Activated CD8-positive, alpha-beta memory T cell treated with anti-CD3 and anti-CD28 coated beads, Interleukin-2, amount 10 ng/mL, durations not matched to agents 7 days and 5 days (primary cell): ENCODE measurements at regions of chr14 and their contacts with region 1.

Region 1: DNA sequence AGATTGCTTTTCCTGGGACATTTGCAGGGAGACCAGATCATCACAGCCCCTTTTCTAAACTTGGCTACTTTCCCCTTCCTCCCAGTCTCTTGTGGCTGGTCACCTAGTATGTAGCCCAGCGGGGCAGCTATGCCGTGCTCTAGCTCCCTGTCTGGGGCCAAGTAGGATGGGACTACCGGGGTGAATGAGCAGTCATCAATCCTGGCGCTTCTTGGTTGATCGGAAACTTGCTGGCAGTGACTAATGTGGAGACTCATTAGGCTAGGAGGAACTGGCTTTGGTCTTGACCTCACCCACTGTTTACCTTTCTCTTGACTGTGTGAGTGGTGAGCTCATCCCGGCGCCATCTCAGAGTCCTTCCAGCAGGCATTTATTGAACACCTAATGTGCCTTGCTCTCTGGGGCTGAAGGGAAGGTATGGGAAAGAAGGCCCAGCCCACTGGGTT is 15.9 kb downstream of the PLEKHG3 start:
- DNase-seq: no peak
- ATAC-seq: no peak
- H3K4me3 Mint-ChIP-seq: no peak overlapping the region
- H3K27ac Mint-ChIP-seq: no peak overlapping the region
- H3K4me1 Mint-ChIP-seq: peaks cover 69% of the 10 kb centered on the region
- H3K27me3 Mint-ChIP-seq: no peaks in the 10 kb centered on the region

Region 2: GRCh38 chr14:64681796-64682710 is 38.1 kb before region 1 on chr14:
- CTCF ChIA-PET with region 1: no interaction called
- DNase-seq: no peak
- ATAC-seq: no peak
- H3K4me3 Mint-ChIP-seq: no peak overlapping the region
- H3K27ac Mint-ChIP-seq: peak overlapping the region; percentile 31
- H3K4me1 Mint-ChIP-seq: peaks cover 17% of the 10 kb centered on the region
- H3K27me3 Mint-ChIP-seq: no peaks in the 10 kb centered on the region

Region 3: GRCh38 chr14:64704143-64704742 is 15.9 kb before region 1 on chr14 and contains the start of gene PLEKHG3:
- CTCF ChIA-PET with region 1: interaction called, 45 read pairs
- DNase-seq: no peak
- ATAC-seq: peak; percentile 47
- H3K4me3 Mint-ChIP-seq: peak within 1 kb of the TSS; percentile 67
- H3K27ac Mint-ChIP-seq: peak within 1 kb of the TSS; percentile 47
- H3K4me1 Mint-ChIP-seq: peaks cover 61% of the 10 kb centered on the region
- H3K27me3 Mint-ChIP-seq: peaks cover 64% of the 10 kb centered on the region
- total RNA-seq, gene PLEKHG3: 11.9 to 28.2 TPM